ENCODE measurements at regions of chr5 and their contacts with region 1.

Region 1: GRCh38 chr5:77491783-77492652 is at the start of gene WDR41:
- DNase-seq: peak; percentile 94
- H3K4me3 ChIP-seq: peak within 1 kb of the TSS; percentile 84
- H3K27ac ChIP-seq: peak within 1 kb of the TSS; percentile 94
- H3K27me3 ChIP-seq: peaks cover 3% of the 10 kb centered on the region
- CTCF ChIP-seq: peak; percentile 82
- polyA plus RNA-seq, gene WDR41: 70.7 and 84.5 TPM in 2 replicates

Region 2: GRCh38 chr5:77086689-77087483 is 405.1 kb before region 1 on chr5 and contains the start of gene ZBED3:
- CTCF ChIA-PET with region 1: interaction called, 19 read pairs
- POLR2A ChIA-PET with region 1: no interaction called
- DNase-seq: peak; percentile 24
- H3K4me3 ChIP-seq: peak within 1 kb of the TSS; percentile 77
- H3K27ac ChIP-seq: peak within 1 kb of the TSS; percentile 88
- H3K27me3 ChIP-seq: no peaks in the 10 kb centered on the region
- CTCF ChIP-seq: no peak; the same call in none of the 2 replicates
- polyA plus RNA-seq, gene ZBED3: 7.3 TPM in 2 replicates

Region 3: GRCh38 chr5:77143998-77144836 is 347.8 kb before region 1 on chr5:
- CTCF ChIA-PET with region 1: interaction called, 110 read pairs
- POLR2A ChIA-PET with region 1: interaction called, 3 read pairs
- DNase-seq: peak; percentile 56
- H3K4me3 ChIP-seq: no peak overlapping the region
- H3K27ac ChIP-seq: no peak overlapping the region
- H3K27me3 ChIP-seq: no peaks in the 10 kb centered on the region
- CTCF ChIP-seq: peak; percentile 95

Region 4: GRCh38 chr5:77168161-77168875 is 323.7 kb before region 1 on chr5:
- CTCF ChIA-PET with region 1: interaction called, 10 read pairs
- POLR2A ChIA-PET with region 1: no interaction called
- DNase-seq: no peak
- H3K4me3 ChIP-seq: peak overlapping the region; percentile 35
- H3K27ac ChIP-seq: peak overlapping the region; percentile 89
- H3K27me3 ChIP-seq: no peaks in the 10 kb centered on the region
- CTCF ChIP-seq: no peak

Region 5: GRCh38 chr5:77463905-77464304 is 28.1 kb before region 1 on chr5:
- CTCF ChIA-PET with region 1: interaction called, 13 read pairs
- POLR2A ChIA-PET with region 1: no interaction called
- DNase-seq: no peak
- H3K4me3 ChIP-seq: no peak overlapping the region
- H3K27ac ChIP-seq: no peak overlapping the region
- H3K27me3 ChIP-seq: no peaks in the 10 kb centered on the region
- CTCF ChIP-seq: no peak

Region 6: DNA sequence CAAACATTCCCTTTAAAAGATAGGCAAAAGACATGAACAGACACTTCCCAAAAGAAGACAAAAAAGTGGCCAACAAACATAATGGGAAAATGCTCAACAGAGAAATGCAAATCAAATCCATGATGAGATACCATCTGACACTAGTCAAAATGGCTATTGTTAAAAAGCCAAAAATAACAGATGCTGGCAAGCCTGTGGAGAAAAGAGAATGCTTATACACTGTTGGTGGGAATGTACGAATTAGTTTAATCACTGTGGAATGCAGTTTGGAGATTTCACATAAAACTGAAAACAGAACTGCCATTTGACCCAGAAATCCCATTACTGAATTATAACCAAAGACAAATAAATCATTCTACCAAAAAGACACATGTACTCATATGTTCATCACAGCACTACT is 58.4 kb after region 1 on chr5:
- CTCF ChIA-PET with region 1: no interaction called
- POLR2A ChIA-PET with region 1: no interaction called
- DNase-seq: no peak
- H3K4me3 ChIP-seq: no peak overlapping the region
- H3K27ac ChIP-seq: no peak overlapping the region
- H3K27me3 ChIP-seq: no peaks in the 10 kb centered on the region
- CTCF ChIP-seq: no peak

Region 7: GRCh38 chr5:77972469-77973252 is 480.6 kb after region 1 on chr5:
- CTCF ChIA-PET with region 1: no interaction called
- POLR2A ChIA-PET with region 1: no interaction called
- DNase-seq: no peak
- H3K4me3 ChIP-seq: peak overlapping the region; percentile 48
- H3K27ac ChIP-seq: no peak overlapping the region
- H3K27me3 ChIP-seq: peaks cover 66% of the 10 kb centered on the region
- CTCF ChIP-seq: peak; percentile 29

Measured in AG04450 (cell line).